ENCODE measurements at regions of chr15 and their contacts with region 1.

Region 1: DNA sequence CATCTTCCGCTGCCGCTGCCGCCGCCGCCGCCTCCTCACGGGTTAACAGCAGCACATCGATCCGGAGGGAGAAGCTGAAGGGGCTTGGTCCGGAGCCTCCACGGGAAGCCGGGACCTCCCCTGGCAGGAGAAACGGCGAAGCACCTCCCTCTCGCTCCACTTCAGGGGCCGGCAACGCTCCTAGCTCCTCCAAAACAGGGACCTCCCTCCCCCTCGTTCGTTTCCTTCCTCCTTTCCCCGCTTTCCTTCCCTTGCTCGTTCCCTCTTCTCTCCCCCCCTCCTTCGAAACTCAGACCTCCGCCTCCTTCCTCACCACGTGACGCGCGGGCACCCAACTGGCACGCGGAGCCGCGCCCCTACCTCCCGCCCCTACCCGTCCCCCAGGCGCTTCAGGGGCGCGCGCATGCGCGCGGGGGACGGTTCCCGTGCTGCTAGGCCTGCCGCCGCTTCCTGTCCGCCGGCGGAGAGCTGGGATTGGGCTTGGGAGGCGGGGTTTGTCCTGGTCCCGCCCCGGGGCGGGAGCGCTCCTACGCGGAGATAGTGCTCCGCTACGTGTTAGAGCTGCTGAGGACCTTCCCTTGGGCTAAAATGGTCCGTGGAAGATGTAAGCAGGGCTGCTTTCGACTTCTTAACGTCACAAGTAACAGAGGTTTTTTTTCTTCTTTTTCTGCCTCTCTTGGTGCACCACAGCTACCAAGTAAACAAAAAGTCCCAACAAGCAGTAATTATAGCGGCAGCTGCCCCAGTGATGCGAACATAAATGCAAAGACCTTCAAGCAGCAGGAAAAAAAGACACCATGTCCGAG is at the start of gene ADAM10:
- DNase-seq: peak; percentile 98
- H3K4me3 Mint-ChIP-seq: peak within 1 kb of the TSS; percentile 93
- H3K27ac Mint-ChIP-seq: peak within 1 kb of the TSS; percentile 95
- H3K4me1 Mint-ChIP-seq: peaks cover 37% of the 10 kb centered on the region
- H3K27me3 Mint-ChIP-seq: no peaks in the 10 kb centered on the region
- total RNA-seq, gene ADAM10: 98.7 and 116 TPM in 2 replicates

Region 2: DNA sequence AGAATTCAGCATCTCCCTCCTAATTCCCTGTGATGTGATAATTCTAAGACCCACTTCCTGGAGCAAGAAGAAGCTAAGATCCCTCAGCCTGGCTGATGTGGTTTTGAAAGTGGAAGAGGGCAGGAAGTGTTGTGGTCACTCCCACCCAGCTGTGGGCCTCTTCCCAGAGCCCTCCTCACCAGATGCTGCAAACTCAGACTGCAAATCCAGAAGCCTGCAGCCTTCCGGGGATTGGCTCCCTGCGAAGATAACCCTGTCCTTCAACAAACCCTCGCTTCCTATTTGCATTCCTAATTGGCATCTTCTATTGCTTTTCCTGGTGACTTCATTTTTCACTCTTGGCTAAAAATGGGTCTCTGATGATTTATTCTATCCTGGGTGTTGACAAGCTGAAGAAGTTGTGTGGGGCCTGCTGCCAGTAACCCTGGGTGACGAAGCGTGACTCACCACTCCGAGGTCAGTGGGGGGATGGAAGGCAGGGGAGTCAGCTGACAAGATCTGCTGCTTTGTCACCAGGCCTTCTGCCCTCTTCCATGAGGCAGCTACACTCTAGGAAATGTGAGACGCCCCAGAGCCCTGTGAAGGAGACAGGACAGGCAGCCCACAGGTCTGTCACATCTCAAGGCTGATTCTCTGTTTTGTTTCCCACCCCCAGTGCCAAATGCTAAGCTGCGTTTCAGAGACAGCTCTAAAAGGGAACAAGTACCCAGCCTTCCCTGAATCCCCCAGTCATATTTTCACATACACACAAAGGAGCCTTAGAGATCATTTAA is 417.6 kb before region 1 on chr15:
- intact Hi-C with region 1: loop called (anchors 1 kb)
- DNase-seq: peak; percentile 84
- H3K4me3 Mint-ChIP-seq: peak overlapping the region; percentile 43
- H3K27ac Mint-ChIP-seq: peak overlapping the region; percentile 95
- H3K4me1 Mint-ChIP-seq: peaks cover 44% of the 10 kb centered on the region
- H3K27me3 Mint-ChIP-seq: no peaks in the 10 kb centered on the region

Region 3: DNA sequence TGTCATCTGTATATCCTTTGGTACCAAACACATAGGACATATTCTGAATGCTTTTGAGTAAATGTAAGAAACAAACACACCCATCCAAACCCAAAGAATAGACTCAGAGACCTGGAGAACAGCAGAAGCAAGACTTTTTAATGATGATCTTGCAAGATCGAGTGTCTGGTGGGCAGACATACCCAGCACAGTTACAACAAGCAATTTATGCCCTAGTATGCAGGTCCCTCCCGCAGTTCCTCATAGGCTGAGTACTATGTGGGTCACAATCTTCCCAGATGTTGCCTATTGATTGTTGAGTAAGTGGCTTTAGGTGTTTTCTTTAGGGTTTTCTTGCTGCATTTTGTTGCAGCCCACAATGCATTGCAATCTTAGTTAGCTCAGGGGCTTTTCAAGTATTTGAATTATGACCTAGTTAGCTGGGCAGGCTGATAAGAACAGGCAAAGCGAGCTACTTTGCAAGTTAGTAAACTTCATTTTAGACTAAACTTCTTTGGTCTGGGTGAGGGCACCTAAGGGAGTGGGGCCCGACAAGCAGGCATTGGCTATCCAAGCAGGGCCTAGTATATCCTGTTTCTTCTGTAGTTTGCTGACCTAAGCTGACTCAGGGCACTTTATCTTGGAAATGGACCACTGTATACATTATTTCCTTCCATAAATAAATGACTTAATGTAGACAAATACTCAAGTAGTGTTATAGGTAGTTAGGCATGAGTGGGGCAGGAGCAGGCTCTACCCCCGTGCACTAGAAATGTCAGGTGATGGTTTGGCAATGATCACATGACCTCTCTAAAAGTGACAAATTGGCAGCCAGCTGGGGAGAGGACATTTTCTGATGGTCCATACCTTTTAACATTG is 405.3 kb before region 1 on chr15:
- intact Hi-C with region 1: no loop called
- DNase-seq: no peak
- H3K4me3 Mint-ChIP-seq: no peak overlapping the region
- H3K27ac Mint-ChIP-seq: no peak overlapping the region
- H3K4me1 Mint-ChIP-seq: peaks cover 22% of the 10 kb centered on the region
- H3K27me3 Mint-ChIP-seq: peaks cover 4% of the 10 kb centered on the region

Region 4: GRCh38 chr15:58457381-58457965 is 292.3 kb before region 1 on chr15:
- intact Hi-C with region 1: loop called (anchors 2 kb)
- DNase-seq: peak; percentile 26
- H3K4me3 Mint-ChIP-seq: peak overlapping the region; percentile 29
- H3K27ac Mint-ChIP-seq: peak overlapping the region; percentile 84
- H3K4me1 Mint-ChIP-seq: peaks cover 87% of the 10 kb centered on the region
- H3K27me3 Mint-ChIP-seq: no peaks in the 10 kb centered on the region

Region 5: GRCh38 chr15:58574631-58575030 is 175.1 kb before region 1 on chr15:
- intact Hi-C with region 1: no loop called
- DNase-seq: no peak
- H3K4me3 Mint-ChIP-seq: no peak overlapping the region
- H3K27ac Mint-ChIP-seq: no peak overlapping the region
- H3K4me1 Mint-ChIP-seq: peaks cover 13% of the 10 kb centered on the region
- H3K27me3 Mint-ChIP-seq: peaks cover 4% of the 10 kb centered on the region

Region 6: GRCh38 chr15:58628206-58628947 is 121.4 kb before region 1 on chr15:
- intact Hi-C with region 1: loop called (anchors 5 kb)
- DNase-seq: no peak
- H3K4me3 Mint-ChIP-seq: peak overlapping the region; percentile 80
- H3K27ac Mint-ChIP-seq: peak overlapping the region; percentile 86
- H3K4me1 Mint-ChIP-seq: peaks cover 55% of the 10 kb centered on the region
- H3K27me3 Mint-ChIP-seq: no peaks in the 10 kb centered on the region

Region 7: DNA sequence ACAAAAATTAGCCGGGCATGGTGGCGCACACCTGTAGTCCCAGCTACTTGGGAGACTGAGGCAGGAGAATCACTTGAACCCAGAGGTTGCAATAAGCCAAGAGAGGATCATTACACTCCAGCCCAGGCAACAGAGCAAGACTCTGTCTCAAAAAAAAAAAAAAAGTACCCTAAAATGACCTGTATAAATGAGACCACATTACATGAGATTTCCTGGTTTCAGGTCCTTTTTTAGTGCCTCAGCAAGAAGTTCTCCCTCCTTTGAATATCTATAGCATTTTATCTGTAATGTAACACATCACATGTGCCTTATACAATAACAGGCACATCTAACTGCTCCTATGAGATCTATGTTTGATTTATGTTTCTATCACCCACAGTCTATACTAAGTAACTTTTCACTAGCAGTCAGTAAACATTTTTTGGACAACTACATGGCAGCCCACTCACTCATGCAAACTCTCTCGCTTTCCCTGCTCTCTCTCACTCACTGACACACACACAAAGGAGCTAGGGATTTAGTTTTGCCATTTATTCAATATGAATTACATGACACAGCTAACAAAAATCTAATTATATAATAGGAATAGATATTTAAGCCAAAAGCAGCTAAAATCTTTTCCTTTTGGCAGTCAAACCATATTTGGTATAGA is 34.3 kb before region 1 on chr15:
- intact Hi-C with region 1: no loop called
- DNase-seq: no peak
- H3K4me3 Mint-ChIP-seq: no peak overlapping the region
- H3K27ac Mint-ChIP-seq: no peak overlapping the region
- H3K4me1 Mint-ChIP-seq: peaks cover 16% of the 10 kb centered on the region
- H3K27me3 Mint-ChIP-seq: no peaks in the 10 kb centered on the region

Region 8: DNA sequence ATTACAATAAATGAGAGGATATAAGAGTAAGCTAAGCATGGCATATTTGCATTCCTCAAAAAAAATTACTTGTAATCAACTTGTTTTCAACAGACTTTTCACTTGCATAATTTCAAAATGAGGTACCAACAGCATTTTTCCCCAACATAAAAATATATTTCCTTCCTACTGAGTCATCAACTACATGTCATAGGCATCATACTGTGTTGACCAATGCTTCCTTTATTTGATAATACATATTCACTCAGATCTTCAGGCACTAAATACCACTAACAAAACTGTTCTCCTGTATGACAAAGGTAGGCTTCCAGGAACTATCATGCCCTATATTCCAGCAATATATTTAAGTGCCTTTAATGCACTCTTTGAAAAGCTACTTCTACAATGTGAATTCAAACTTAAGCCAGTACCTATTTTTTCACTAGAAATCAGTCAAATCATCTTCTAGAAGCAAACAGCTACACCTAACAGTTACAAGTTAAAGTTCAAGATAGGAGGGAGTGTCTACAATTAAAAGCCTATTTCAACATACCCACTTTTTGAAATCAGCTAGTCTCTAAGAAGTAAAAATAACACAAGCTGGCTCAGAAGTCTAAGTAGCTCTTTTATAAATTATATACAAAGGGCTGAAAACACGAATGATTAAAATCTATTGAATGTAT is 11.6 kb before region 1 on chr15:
- intact Hi-C with region 1: loop called (anchors 1 kb)
- DNase-seq: no peak
- H3K4me3 Mint-ChIP-seq: no peak overlapping the region
- H3K27ac Mint-ChIP-seq: peak overlapping the region; percentile 21
- H3K4me1 Mint-ChIP-seq: peaks cover 47% of the 10 kb centered on the region
- H3K27me3 Mint-ChIP-seq: no peaks in the 10 kb centered on the region

Region 9: DNA sequence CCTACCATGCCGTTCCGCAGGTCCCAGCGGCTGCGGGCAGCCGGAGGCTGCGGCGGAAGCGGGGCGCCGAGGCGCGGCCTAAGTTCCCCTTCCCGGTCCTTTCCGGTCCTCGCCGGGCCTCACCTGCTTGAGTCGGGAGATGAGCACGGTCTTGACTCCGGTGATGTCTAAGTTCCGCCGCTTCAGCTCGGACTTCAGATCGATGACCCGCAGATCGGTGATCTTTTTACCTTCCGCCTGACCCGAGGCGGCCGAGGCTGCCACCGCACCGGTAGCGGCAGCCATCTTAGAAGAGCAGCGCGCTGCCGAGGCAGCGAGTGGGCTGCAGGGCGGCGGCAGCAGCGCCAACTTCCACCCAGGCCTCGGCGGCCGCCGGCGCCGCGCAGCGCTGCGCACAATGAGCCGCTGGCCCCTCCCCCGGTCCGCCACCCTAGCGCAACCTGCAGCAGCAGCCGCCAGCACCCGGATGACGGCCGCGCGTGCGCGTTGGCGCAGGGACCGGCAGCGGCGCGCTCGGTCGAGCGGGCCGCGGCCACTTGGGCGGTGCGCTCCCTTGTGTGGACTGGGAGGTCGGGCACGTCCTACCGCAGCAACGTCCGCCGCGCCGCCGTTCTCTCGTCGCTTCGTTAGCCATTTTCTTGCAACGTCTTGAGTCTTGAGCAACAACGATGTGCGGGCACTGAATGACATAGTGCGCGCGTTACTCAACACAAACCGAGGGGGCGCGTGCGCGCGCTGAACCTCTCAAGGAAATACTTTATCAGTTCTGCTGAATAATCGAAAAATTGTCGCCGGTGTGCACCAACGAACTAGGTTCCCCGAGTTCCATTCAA is 183.8 kb after region 1 on chr15 and contains the start of gene SLTM:
- intact Hi-C with region 1: loop called (anchors 1 kb)
- DNase-seq: peak; percentile 88
- H3K4me3 Mint-ChIP-seq: peak within 1 kb of the TSS; percentile 98
- H3K27ac Mint-ChIP-seq: peak within 1 kb of the TSS; percentile 100
- H3K4me1 Mint-ChIP-seq: peaks cover 34% of the 10 kb centered on the region
- H3K27me3 Mint-ChIP-seq: no peaks in the 10 kb centered on the region
- total RNA-seq, gene SLTM: 142 and 143 TPM in 2 replicates

Measured in activated T-helper 1 cell treated with anti-CD3 and anti-CD28 coated beads, Interleukin-12 subunit alpha, Interleukin-12 subunit beta, Interleukin-2, Interleukin-4 antibody, amounts not matched to agents 30 ng/mL and 10 ng/mL and 1 ng/mL, durations not matched to agents 14 hours and 24 hours and 36 hours (primary cell).